Pancreas (tissue), 10 donors: ENCODE measurements at regions of chr1 and their contacts with region 1.

Region 1: DNA sequence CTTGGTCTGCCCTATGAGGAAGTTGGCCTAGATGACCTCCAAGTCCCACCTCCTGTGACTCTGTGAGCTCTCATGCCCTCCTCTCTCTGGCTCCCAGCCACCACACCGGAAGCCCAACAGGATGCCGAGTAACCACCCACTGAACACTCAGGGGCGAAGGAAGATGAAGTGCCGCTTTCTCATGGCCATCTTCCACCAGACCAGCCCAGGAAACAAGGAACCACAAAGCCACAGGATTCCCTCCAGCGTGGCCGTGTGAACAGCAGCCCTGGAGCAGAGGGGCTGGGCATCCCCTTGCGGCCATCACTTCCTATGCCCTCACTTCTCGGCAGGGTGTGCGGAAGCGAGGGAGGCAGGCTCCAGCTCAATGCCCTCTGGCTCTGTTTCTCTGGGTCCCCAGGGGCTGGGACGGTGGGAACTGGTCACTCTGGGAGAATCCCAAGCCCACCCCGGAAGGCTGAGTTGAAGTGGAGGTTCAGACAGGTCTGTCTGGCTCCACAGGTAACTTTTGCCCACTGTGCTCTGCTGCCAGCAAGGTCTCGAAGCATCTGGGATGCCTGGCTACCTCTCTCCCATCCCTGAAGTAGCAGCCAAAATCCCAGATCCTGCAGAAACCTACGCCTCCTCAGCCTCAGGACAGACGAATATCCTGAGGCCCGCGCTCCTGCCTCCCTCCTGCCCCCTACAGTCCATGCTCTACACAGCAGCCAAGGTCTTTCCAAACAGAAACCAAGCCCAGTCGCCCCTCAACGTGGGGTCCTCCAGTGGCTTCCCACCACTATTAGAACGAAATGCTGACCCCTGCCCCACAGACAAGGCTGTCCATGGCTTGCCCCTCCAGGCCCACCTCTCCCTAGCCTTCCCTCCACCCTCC is 44.2 kb upstream of the ECE1 start:
- DNase-seq: peak in 5 of 6 donors; percentile 75 to 80 (median 79)
- ATAC-seq: peak in 3 of 4 donors; percentile 38 to 50 (median 39)
- H3K4me3 ChIP-seq: peak overlapping the region in 1 of 4 donors; percentile 4
- H3K27ac ChIP-seq: peak overlapping the region; percentile 33 to 84 (median 52)
- H3K4me1 ChIP-seq: peaks cover 77 to 93% (median 83%) of the 10 kb centered on the region in 3 donors
- H3K27me3 ChIP-seq: no peaks in the 10 kb centered on the region
- CTCF ChIP-seq: peak; percentile 23 to 63 (median 54)

Region 2: GRCh38 chr1:21117597-21118001 is 216.9 kb before region 1 on chr1:
- intact Hi-C with region 1: no loop called
- DNase-seq: no peak
- ATAC-seq: peak in 2 of 4 donors; percentile 34 to 56
- H3K4me3 ChIP-seq: no peak overlapping the region
- H3K27ac ChIP-seq: no peak overlapping the region
- H3K4me1 ChIP-seq: peaks cover 0 to 11% (median 4%) of the 10 kb centered on the region in 3 donors
- H3K27me3 ChIP-seq: no peaks in the 10 kb centered on the region
- CTCF ChIP-seq: no peak

Region 3: DNA sequence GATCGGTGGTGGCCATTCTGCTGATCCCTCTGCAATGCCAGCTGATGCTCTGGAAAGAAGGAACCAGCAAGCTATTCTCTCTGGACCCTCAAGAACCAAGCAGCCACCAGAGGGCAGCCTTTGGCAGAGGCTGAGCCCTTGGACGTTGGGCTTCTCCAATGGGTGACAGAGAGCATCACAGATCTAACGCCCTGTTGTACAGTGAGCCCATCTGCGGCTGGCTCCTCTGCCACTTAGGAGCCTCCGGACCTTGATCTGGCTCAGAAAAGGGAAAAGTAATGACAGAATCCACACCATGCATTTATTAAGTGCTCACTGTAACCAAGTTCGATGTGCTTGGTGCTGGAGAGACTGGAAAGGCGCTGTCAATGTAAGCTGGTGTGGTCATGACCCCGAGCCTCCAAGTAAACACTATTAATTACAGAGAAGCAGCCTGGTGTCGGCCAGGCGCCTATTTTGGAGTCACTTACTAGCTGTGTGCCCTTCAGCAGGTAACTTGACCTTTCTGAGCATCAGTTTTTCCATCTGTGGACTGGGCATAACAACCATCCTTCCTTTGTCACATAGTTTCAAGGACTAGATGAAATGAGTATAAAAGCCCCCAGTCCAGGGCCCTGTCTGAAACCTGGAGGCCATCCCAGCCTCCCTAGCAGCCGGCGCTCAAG is 79.0 kb before region 1 on chr1:
- intact Hi-C with region 1: loop called in 2 of 3 experiments (anchors 5 to 10 kb)
- DNase-seq: peak; percentile 77 to 94 (median 89)
- ATAC-seq: peak; percentile 17 to 76 (median 49)
- H3K4me3 ChIP-seq: no peak overlapping the region
- H3K27ac ChIP-seq: peak overlapping the region in 2 of 4 donors; percentile 92 to 95
- H3K4me1 ChIP-seq: peaks cover 34 to 36% (median 36%) of the 10 kb centered on the region in 3 donors
- H3K27me3 ChIP-seq: no peaks in the 10 kb centered on the region
- CTCF ChIP-seq: peak; percentile 64 to 75 (median 66)

Region 4: DNA sequence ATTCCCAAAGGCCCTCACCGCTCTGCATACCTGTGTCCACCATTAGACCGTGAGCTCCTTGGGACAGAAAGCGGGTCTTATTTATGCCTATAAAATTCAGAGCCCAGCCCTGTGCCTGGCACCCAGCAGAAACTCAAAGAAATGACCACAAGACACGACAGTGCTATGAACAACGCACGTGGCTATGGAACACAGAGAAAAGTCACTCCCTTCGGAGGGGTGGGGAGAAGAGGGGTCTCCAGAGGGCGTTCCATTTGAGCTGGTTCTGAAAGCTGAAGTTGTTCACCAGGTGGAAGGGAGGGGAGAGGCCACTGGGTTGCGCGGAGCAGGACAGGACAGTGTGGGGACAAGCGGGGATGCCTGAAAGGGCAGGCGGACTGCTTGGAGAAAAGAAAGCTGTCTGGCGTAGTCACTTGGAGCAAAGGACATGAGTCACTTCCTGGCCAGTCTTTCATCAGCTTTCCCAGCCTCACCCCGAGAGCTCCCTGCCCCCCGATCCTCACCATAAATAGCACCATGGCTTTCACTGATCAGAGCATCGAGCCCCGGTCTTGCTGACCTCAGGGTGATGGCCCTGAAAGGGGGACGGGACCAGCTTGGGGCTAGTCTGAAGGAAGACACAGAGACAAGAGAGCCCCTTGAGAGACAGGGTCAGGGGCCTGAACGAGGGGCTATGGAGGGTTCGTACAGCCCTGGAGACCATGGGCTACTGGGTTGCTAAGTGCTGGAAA is 72.7 kb before region 1 on chr1:
- intact Hi-C with region 1: loop called in 2 of 3 experiments (anchors 5 to 10 kb)
- DNase-seq: peak in 5 of 6 donors; percentile 53 to 78 (median 64)
- ATAC-seq: peak; percentile 50 to 82 (median 60)
- H3K4me3 ChIP-seq: no peak overlapping the region
- H3K27ac ChIP-seq: peak overlapping the region; percentile 75 to 90 (median 88)
- H3K4me1 ChIP-seq: peaks cover 23 to 32% (median 23%) of the 10 kb centered on the region in 3 donors
- H3K27me3 ChIP-seq: no peaks in the 10 kb centered on the region
- CTCF ChIP-seq: no peak

Region 5: GRCh38 chr1:21289700-21290545 is 44.5 kb before region 1 on chr1 and contains the start of gene ECE1:
- intact Hi-C with region 1: loop called in 1 of 3 experiments (anchors 10 kb)
- DNase-seq: peak in 3 of 6 donors; percentile 66 to 86 (median 82)
- ATAC-seq: peak; percentile 23 to 57 (median 50)
- H3K4me3 ChIP-seq: peak within 1 kb of the TSS; percentile 41 to 67 (median 52)
- H3K27ac ChIP-seq: peak within 1 kb of the TSS; percentile 26 to 70 (median 46)
- H3K4me1 ChIP-seq: peaks cover 1 to 33% (median 15%) of the 10 kb centered on the region in 3 donors
- H3K27me3 ChIP-seq: no peaks in the 10 kb centered on the region
- CTCF ChIP-seq: no peak
- total RNA-seq, gene ECE1: 68.4 to 141 (median 89.1) TPM

Region 6: DNA sequence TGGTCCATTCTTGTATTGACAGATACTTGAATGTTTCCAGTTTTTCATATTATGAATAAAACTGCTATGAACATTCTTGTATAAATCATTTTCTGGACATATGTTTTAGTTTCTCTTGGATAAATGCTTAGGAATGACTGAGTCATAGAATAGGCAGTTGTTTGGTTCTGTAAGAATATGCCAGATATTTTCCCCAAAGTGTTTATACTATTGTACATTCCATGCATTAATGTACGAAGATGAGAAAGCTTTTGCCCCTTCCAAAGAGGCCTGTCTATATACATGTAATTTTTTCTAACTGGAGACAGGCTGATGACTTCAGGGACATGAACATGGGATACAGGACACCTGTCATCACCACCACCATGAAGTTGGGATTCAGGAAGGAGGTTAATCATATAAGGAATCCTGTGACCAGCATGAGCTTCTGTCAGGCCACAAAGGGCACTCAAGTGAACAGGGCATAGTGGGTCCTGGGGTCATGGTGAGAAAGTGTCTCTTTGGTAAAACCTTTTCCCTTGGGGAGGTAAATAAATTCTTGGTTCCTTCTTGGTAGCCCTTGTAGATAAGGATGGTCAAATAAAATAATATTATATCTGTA is 116.9 kb after region 1 on chr1:
- intact Hi-C with region 1: no loop called
- DNase-seq: no peak
- ATAC-seq: no peak
- H3K4me3 ChIP-seq: no peak overlapping the region
- H3K27ac ChIP-seq: no peak overlapping the region
- H3K4me1 ChIP-seq: no peaks in the 10 kb centered on the region
- H3K27me3 ChIP-seq: no peaks in the 10 kb centered on the region
- CTCF ChIP-seq: no peak